Right ventricle myocardium inferior (tissue), 1 donor: ENCODE measurements at regions of chr9 and their contacts with region 1.

Region 1: DNA sequence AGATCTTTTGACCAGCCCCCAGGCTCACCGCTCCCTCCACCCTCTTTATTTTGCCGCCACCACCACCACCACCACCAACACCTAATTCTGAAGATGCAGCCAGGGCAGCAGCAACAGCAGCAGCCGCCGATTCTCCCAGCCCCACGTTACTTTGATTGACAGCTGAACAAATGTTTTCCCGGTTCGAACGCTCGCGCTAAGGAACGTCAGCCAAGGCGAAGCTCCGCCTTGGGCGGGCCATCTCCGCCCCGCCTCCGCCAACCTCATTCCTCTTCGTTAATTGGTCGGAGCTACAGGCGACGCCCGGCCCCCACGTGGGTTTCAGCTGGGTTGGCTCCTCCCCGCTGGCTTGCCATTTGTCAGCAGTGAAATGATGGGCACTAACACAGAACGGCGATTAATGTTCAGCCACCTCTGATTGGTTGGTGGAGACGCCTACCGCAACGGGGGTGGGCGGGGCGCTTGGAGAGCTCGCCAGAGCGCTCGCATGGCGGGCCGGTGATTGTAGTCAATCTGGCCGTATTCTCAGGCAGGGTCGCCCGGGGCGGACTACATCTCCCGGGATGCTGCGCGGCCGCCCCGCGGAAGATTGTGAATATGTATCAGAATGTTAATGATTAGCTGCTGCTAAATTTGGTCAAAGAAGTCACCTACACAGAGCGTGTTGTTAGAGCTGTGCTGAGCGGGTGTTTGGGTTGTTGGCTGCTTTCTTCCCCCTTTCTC is at the start of gene TLE4:
- DNase-seq: peak; percentile 100
- ATAC-seq: peak; percentile 98
- total RNA-seq, gene TLE4: 12.1 TPM

Region 2: DNA sequence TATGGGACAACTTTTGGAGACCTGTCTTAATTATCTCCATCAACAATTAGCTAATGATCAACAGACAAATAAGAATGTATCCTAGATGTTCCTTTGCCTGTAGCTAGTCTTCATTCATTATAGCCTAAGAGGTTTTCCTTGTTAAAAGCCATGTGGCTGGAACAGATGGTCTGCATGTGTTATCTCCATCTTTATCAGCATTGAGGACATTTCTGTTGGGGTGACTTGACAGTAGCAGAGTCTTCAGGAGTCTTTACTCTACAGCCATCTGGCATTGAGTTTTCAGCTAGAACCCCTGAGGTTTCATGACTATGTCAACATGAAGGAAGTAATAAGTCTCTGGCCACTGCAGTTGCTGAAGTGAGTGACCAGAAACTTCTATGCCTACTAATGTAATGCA is 106.3 kb before region 1 on chr9:
- intact Hi-C with region 1: no loop called
- DNase-seq: no peak
- ATAC-seq: no peak

Region 3: GRCh38 chr9:79623799-79624721 is 52.6 kb after region 1 on chr9:
- intact Hi-C with region 1: loop called (anchors 5 kb)
- DNase-seq: no peak
- ATAC-seq: peak; percentile 82

Region 4: DNA sequence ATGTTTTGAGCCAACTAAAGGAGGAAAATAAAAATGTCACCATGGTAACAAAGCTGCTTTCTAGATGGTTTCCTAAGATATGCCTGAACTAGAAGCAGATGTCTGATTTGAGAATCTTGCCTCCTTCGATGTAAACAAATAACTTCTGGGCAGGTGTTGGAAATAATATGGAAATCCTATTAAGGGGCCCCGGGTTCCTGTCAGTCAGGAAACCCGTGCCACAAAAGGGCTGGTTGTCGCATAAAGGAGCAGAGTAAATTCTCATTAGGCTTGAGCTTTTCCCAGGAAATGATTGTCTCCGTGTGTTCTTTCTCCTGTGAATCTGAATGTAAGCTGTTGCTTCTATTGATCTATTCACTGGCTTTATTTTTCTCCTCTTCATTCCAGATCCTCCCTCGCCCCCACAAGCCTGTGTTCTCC is 91.1 kb after region 1 on chr9:
- intact Hi-C with region 1: loop called (anchors 1 kb)
- DNase-seq: no peak
- ATAC-seq: no peak